Mammary epithelial cell (primary cell): ENCODE measurements at regions of chr12 and their contacts with region 1.

Region 1: DNA sequence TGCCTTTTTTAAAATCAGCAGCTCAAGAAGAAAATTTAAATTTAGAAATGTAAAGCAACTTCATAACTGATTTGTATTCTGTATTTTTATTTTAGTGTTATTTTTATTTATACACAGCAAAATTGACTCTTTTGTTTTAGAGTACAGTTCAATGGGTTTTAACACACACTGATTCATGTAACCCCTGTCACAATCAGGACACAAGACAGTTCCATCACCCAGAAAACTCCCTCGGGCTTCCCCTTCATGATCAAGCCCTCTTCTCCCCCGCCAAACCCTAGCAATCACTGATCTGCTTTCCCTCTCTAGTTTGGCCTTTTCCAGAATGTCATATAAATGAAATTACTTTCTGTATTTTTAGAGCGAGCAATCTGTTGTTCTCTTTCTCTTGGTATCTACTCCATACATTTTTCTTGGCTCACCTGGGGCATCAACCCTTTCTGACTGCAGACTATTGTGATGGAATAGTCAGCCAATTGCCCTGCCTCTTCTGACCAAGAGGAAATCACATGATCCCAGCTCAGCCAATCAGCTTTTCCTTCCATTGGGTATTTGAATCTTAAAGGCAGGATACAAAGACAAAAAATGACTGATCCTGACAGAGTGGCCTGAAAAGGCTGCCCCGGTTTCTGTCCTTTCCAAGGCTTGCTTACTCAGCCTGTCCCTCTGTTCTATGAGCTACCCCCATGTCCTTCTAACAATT is 5.3 kb downstream of the SLC5A8 start:
- DNase-seq: no peak
- H3K4me3 ChIP-seq: no peak overlapping the region
- H3K27ac ChIP-seq: no peak overlapping the region
- H3K4me1 ChIP-seq: peaks cover 3% of the 10 kb centered on the region
- H3K27me3 ChIP-seq: peaks cover 10% of the 10 kb centered on the region
- CTCF ChIP-seq: no peak

Region 2: DNA sequence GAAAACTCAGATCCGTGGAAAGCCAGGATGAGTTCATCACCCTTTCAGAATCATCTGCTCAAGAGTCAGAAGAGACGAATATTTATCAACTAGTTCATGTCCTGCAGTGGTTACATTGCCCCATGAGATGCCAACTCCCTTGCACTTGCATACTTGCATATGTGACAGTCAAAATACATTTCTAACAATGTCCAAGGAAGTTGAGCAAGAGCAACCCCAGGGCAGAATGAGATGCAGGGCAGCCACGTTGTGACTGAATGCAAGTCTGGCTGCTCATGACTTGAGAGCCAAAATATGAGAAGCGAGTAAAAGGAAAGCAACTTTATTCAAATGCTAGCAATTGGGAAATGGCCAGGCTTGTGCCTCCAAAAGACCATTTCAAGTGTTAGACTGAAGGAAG is 51.5 kb after region 1 on chr12:
- CTCF ChIA-PET with region 1: no interaction called
- dilution Hi-C with region 1: loop called (anchors 5 kb)
- in situ Hi-C with region 1: no loop called
- intact Hi-C with region 1: no loop called
- DNase-seq: no peak
- H3K4me3 ChIP-seq: no peak overlapping the region
- H3K27ac ChIP-seq: no peak overlapping the region
- H3K4me1 ChIP-seq: no peaks in the 10 kb centered on the region
- H3K27me3 ChIP-seq: no peaks in the 10 kb centered on the region
- CTCF ChIP-seq: no peak